ENCODE measurements at regions of chr21 and their contacts with region 1.

Region 1: DNA sequence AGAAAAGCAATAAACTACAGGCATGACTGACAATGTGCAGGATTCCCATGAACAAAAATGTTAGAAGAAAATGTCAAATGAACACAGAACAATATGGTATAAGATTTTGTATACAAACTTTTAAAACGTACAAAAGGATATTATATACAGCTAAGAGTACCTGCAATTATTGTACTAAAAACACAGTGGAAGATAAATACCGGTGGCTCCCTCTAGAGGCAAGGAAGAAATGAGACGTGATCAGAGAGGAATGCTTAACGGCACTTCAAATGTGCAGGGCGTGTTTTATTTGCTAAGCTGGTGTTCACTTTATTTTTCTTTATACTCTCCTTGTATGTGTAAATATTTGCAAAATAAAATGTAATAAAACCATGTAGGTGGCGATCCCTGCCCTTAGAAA is 191.8 kb upstream of the SAMSN1 start:
- DNase-seq: peak; percentile 63
- ATAC-seq: peak; percentile 84
- H3K4me3 Mint-ChIP-seq: no peak overlapping the region
- H3K27ac Mint-ChIP-seq: no peak overlapping the region
- H3K4me1 Mint-ChIP-seq: peaks cover 42% of the 10 kb centered on the region
- H3K27me3 Mint-ChIP-seq: no peaks in the 10 kb centered on the region

Region 2: GRCh38 chr21:14453339-14454015 is 284.4 kb before region 1 on chr21:
- CTCF ChIA-PET with region 1: interaction called, 10 read pairs
- DNase-seq: peak; percentile 56
- ATAC-seq: peak; percentile 93
- H3K4me3 Mint-ChIP-seq: no peak overlapping the region
- H3K27ac Mint-ChIP-seq: peak overlapping the region; percentile 80
- H3K4me1 Mint-ChIP-seq: peaks cover 46% of the 10 kb centered on the region
- H3K27me3 Mint-ChIP-seq: no peaks in the 10 kb centered on the region

Region 3: DNA sequence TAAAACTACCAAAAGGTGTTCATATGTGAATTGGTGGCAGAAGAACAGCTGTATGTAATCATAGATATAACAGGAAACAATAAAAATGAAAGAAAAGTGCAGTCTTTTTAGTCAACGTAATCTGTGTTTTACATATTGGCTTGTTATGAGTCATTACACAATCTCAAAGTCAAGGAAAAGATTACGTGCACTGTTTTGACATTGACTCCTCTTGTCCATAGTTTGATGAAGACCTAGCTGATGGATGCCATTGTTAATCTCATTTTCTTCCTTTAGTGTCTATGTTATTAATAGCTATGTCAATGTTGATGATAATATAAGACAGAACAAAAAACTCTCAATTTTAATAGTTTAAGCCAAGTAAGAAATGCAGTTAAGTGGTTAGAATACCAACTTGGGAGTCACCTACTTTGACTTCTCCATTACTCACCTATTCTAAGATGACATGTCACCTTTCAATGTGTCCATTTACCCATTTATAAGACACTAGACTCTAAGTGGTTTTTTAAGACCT is 107.3 kb before region 1 on chr21:
- CTCF ChIA-PET with region 1: interaction called, 10 read pairs
- DNase-seq: no peak
- ATAC-seq: peak; percentile 93
- H3K4me3 Mint-ChIP-seq: no peak overlapping the region
- H3K27ac Mint-ChIP-seq: peak overlapping the region; percentile 70
- H3K4me1 Mint-ChIP-seq: peaks cover 13% of the 10 kb centered on the region
- H3K27me3 Mint-ChIP-seq: no peaks in the 10 kb centered on the region

Region 4: GRCh38 chr21:14722841-14723483 is 15.0 kb before region 1 on chr21:
- CTCF ChIA-PET with region 1: interaction called, 12 read pairs
- DNase-seq: no peak
- ATAC-seq: peak; percentile 55
- H3K4me3 Mint-ChIP-seq: no peak overlapping the region
- H3K27ac Mint-ChIP-seq: peak overlapping the region; percentile 12
- H3K4me1 Mint-ChIP-seq: peaks cover 8% of the 10 kb centered on the region
- H3K27me3 Mint-ChIP-seq: no peaks in the 10 kb centered on the region

Region 5: GRCh38 chr21:14762734-14763694 is 25.1 kb after region 1 on chr21:
- CTCF ChIA-PET with region 1: interaction called, 18 read pairs
- DNase-seq: no peak
- ATAC-seq: peak; percentile 91
- H3K4me3 Mint-ChIP-seq: no peak overlapping the region
- H3K27ac Mint-ChIP-seq: no peak overlapping the region
- H3K4me1 Mint-ChIP-seq: peaks cover 2% of the 10 kb centered on the region
- H3K27me3 Mint-ChIP-seq: no peaks in the 10 kb centered on the region

Measured in activated CD8-positive, alpha-beta memory T cell treated with anti-CD3 and anti-CD28 coated beads, Interleukin-2, amount 10 ng/mL, durations not matched to agents 7 days and 5 days (primary cell).